Activated CD4-positive, alpha-beta memory T cell treated with anti-CD3 and anti-CD28 coated beads for 36 hours (primary cell): ENCODE measurements at regions of chr1 and their contacts with region 1.

Region 1: GRCh38 chr1:214439352-214440119 is 111.9 kb downstream of the PTPN14 start:
- DNase-seq: peak; percentile 81
- H3K4me3 Mint-ChIP-seq: peak overlapping the region; percentile 44
- H3K27ac Mint-ChIP-seq: peak overlapping the region; percentile 96
- H3K4me1 Mint-ChIP-seq: peaks cover 41% of the 10 kb centered on the region
- H3K27me3 Mint-ChIP-seq: peaks cover 1% of the 10 kb centered on the region

Region 2: GRCh38 chr1:214281021-214281719 is 158.4 kb before region 1 on chr1 and contains the start of gene SMYD2:
- CTCF ChIA-PET with region 1: no interaction called
- POLR2A ChIA-PET with region 1: no interaction called
- intact Hi-C with region 1: loop called (anchors 5 kb)
- DNase-seq: peak; percentile 72
- H3K4me3 Mint-ChIP-seq: peak within 1 kb of the TSS; percentile 86
- H3K27ac Mint-ChIP-seq: peak within 1 kb of the TSS; percentile 77
- H3K4me1 Mint-ChIP-seq: peaks cover 35% of the 10 kb centered on the region
- H3K27me3 Mint-ChIP-seq: no peaks in the 10 kb centered on the region
- total RNA-seq, gene SMYD2: 31.1 to 32.8 TPM

Region 3: DNA sequence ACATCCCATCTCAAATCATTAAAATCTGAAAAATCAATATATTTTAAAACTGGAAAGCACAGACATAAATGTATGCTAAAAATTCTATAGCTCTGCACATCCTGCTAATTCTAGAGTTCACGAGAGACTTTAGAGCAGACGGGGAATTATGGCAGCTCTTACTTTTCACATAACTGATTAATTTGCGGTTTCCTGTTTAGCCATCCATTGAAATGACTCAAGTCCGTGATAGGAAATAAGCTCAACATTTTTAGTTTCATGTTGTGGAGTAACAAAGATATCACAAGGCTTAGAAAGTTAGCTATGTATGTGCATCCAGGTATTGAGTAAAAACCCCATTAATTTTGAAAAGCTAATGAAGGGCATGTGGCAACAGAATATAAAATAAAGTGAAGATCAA is 35.4 kb before region 1 on chr1:
- CTCF ChIA-PET with region 1: no interaction called
- POLR2A ChIA-PET with region 1: interaction called, 3 read pairs
- intact Hi-C with region 1: loop called (anchors 1 kb)
- DNase-seq: no peak
- H3K4me3 Mint-ChIP-seq: no peak overlapping the region
- H3K27ac Mint-ChIP-seq: peak overlapping the region; percentile 29
- H3K4me1 Mint-ChIP-seq: peaks cover 20% of the 10 kb centered on the region
- H3K27me3 Mint-ChIP-seq: no peaks in the 10 kb centered on the region

Region 4: DNA sequence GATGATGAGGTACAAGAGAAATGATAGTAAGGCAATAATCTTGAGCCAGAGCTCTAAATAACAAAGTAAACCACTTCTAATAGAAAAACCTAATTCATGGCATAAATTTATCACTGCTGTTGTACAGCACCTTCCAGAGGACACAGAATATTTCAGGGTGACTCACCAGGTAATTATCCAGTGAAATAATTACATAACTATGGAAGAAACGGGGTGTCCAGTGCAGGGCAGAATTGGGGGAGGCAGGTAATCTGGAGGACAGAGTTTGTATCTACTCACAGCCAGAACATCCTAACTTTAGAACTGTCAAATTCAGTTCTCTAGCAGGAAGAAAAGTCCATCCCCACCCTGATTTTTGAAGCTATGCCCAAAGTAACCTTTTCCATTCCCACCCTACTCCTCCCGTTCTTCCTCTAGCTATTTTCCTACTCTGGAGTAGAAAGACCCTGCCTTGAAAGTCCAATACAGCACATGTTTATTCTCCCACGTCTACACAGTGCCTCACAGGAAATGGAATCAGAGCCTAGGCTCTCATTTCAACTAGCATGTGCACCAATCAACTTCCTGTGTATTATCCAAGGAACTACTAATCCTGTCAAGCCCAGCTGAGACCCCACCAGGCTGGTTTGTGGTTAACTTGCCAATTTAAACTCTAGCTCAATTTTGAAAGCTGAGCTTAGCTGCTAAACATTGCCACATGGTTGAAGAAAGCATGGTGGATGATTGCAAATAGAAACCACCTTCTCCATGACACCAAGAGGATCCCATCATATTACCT is 15.3 kb after region 1 on chr1:
- CTCF ChIA-PET with region 1: interaction called, 6 read pairs
- POLR2A ChIA-PET with region 1: interaction called, 8 read pairs
- intact Hi-C with region 1: loop called (anchors 1 kb)
- DNase-seq: no peak
- H3K4me3 Mint-ChIP-seq: no peak overlapping the region
- H3K27ac Mint-ChIP-seq: no peak overlapping the region
- H3K4me1 Mint-ChIP-seq: peaks cover 14% of the 10 kb centered on the region
- H3K27me3 Mint-ChIP-seq: peaks cover 12% of the 10 kb centered on the region

Region 5: GRCh38 chr1:214602764-214603657 is 163.5 kb after region 1 on chr1 and contains the start of gene CENPF:
- CTCF ChIA-PET with region 1: interaction called, 3 read pairs
- POLR2A ChIA-PET with region 1: no interaction called
- intact Hi-C with region 1: loop called (anchors 1 kb)
- DNase-seq: peak; percentile 97
- H3K4me3 Mint-ChIP-seq: peak within 1 kb of the TSS; percentile 94
- H3K27ac Mint-ChIP-seq: peak within 1 kb of the TSS; percentile 76
- H3K4me1 Mint-ChIP-seq: peaks cover 14% of the 10 kb centered on the region
- H3K27me3 Mint-ChIP-seq: no peaks in the 10 kb centered on the region
- total RNA-seq, gene CENPF: 92.4 to 97.3 TPM